Endothelial cell of umbilical vein (primary cell): ENCODE measurements at regions of chr15 and their contacts with region 1.

Region 1: DNA sequence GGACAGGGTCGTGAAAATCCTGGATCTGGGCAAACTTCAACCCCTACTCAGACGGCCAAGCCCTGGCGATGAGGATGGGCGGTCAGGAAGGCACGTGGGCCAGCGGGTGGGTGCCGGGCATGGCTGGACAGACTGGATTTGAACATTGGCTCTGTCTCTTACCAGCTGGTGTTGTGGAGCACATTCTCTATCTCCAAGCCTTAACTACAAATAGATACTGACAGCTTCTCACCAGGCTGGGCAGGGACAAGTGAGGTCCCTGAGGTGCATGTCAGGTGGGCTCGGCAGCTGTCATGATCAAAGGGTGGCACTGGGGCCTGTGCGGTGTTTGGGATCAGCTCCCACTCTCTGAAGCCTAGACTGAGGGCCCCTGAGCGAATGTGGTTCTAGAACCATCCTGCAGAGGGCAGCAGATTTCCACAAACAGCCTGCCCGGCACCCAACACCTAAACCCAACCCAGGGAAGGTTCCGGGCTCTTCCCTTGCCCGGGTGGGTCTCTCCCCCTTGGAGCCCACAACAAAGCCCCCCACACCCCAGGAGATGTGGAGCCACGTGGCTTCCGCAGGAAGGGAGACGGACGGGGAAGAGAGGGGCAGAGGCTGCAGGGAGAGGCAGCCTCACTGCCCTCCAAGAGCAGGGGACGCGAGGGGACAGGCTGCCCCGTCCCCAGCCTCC is 58.4 kb downstream of the RGMA start:
- DNase-seq: peak; percentile 64
- H3K4me3 ChIP-seq: no peak overlapping the region
- H3K27ac ChIP-seq: no peak overlapping the region
- H3K4me1 ChIP-seq: peaks cover 23% of the 10 kb centered on the region
- H3K27me3 ChIP-seq: no peaks in the 10 kb centered on the region
- CTCF ChIP-seq: peak; percentile 69 to 86
- POLR2A ChIP-seq: no peak

Region 2: DNA sequence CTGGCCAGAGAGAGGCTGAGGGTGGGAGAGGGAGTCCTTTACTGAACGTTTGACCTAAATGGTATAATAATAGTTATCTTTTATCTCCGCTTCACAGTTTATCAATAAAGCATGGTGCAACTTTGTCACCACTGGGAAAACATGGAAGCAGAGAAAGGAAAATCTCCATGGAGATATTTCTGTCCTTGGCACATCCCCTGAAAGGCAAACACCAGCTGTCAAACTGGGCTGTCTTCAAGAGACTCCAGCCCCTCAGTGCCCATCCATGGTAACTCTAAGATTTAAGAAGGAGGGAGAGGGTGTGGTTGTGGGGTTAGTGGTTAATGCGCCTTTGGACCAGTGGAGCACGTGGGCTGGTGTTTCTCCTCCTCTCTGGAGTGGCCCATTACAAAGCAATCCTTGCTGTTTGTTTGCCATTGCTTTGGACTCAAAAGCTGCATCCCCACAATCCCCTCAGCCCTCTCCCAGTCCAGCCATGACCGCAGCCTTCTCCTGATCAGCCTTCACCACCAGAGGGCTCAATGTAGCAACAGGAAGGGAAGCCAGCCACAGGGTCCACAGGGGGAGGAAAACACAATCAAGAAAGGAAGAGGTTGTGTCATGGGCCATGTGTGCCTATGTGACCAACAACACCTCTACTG is 336.8 kb before region 1 on chr15:
- CTCF ChIA-PET with region 1: no interaction called
- POLR2A ChIA-PET with region 1: no interaction called
- dilution Hi-C with region 1: no loop called
- intact Hi-C with region 1: no loop called
- DNase-seq: peak; percentile 69
- H3K4me3 ChIP-seq: no peak overlapping the region
- H3K27ac ChIP-seq: no peak overlapping the region
- H3K4me1 ChIP-seq: peaks cover 2% of the 10 kb centered on the region
- H3K27me3 ChIP-seq: no peaks in the 10 kb centered on the region
- CTCF ChIP-seq: peak; percentile 71 to 75
- POLR2A ChIP-seq: no peak

Region 3: GRCh38 chr15:93018580-93018979 is 12.0 kb before region 1 on chr15:
- CTCF ChIA-PET with region 1: interaction called, 11 read pairs
- POLR2A ChIA-PET with region 1: no interaction called
- dilution Hi-C with region 1: no loop called
- intact Hi-C with region 1: no loop called
- DNase-seq: no peak
- H3K4me3 ChIP-seq: no peak overlapping the region
- H3K27ac ChIP-seq: no peak overlapping the region
- H3K4me1 ChIP-seq: no peaks in the 10 kb centered on the region
- H3K27me3 ChIP-seq: no peaks in the 10 kb centered on the region
- CTCF ChIP-seq: peak in 1 of 2 donors; percentile 16
- POLR2A ChIP-seq: no peak

Region 4: DNA sequence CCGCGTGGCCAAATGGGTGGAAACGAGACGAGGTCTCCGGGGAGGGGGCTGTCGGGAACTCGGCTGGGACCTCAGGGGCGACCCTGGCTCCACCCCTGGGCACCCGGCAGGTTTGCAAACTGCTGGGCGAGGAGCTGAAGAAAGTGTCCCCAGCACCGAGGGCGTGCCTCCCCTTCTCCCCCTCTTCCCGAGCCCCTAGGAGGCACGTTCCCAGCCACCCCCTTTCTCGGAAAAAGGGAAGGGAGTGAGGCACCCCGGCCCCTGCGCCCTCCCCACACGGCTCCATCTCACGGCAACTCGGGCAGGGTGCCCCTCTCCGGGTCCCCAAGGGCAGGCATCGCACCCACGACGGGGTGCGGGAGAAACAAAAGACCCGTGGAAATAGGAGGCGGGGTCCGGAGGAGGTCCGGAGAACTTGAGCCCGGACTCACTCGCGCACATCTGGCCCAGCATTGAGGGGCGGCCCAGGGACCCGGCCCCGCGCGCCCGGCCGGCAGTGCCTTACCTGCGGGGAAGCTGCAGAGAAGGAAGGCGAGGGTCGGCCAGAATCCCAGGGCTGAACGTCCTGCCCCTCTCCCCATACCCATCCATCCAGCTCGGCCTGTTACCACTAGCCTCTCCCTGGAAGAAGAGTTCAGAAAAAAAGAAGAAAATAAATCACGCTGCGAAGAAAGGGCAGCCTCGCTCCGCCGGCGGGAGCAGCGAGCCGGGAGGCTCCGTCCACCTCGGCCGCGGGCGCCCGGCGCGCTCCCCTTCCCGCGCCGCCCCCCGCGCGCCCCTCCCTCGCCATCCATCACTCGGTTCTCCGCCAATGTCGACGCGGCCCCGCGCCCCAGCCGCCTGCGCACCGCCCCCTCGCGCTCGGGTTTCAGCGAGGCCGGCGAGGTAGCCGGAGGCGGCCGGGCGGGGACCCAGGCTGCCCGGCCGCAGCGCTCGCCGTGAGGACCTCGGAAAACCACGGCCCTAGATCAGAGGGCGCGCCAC is 42.1 kb after region 1 on chr15:
- CTCF ChIA-PET with region 1: interaction called, 3 read pairs
- POLR2A ChIA-PET with region 1: no interaction called
- dilution Hi-C with region 1: no loop called
- intact Hi-C with region 1: loop called (anchors 2 kb)
- DNase-seq: peak; percentile 42
- H3K4me3 ChIP-seq: peak overlapping the region in 1 of 3 experiments; percentile 14
- H3K27ac ChIP-seq: no peak overlapping the region
- H3K4me1 ChIP-seq: peaks cover 3% of the 10 kb centered on the region
- H3K27me3 ChIP-seq: peaks cover 20 to 26% of the 10 kb centered on the region in 2 experiments
- CTCF ChIP-seq: no peak
- POLR2A ChIP-seq: no peak

Region 5: DNA sequence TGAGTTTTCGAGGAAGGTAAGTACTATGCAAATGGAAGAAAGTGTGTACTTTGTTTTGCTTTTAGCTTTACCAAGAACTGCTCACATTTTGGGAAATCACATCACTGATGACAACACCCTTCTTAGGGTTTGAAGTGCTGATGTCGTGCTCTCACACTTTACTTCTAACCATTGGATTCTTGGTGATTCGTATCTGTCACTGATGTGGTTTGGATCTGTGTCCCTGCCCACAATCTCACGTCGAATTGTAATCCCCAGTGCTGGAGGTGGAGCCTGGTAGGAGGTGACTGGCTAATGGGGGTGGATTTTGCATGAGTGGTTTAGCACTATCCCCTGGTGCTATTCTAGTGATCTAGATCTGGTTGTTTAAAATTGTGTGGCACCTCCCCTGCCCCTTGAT is 133.8 kb after region 1 on chr15:
- CTCF ChIA-PET with region 1: no interaction called
- POLR2A ChIA-PET with region 1: no interaction called
- dilution Hi-C with region 1: no loop called
- intact Hi-C with region 1: no loop called
- DNase-seq: no peak
- H3K4me3 ChIP-seq: no peak overlapping the region
- H3K27ac ChIP-seq: no peak overlapping the region
- H3K4me1 ChIP-seq: no peaks in the 10 kb centered on the region
- H3K27me3 ChIP-seq: no peaks in the 10 kb centered on the region
- CTCF ChIP-seq: no peak
- POLR2A ChIP-seq: no peak

Region 6: DNA sequence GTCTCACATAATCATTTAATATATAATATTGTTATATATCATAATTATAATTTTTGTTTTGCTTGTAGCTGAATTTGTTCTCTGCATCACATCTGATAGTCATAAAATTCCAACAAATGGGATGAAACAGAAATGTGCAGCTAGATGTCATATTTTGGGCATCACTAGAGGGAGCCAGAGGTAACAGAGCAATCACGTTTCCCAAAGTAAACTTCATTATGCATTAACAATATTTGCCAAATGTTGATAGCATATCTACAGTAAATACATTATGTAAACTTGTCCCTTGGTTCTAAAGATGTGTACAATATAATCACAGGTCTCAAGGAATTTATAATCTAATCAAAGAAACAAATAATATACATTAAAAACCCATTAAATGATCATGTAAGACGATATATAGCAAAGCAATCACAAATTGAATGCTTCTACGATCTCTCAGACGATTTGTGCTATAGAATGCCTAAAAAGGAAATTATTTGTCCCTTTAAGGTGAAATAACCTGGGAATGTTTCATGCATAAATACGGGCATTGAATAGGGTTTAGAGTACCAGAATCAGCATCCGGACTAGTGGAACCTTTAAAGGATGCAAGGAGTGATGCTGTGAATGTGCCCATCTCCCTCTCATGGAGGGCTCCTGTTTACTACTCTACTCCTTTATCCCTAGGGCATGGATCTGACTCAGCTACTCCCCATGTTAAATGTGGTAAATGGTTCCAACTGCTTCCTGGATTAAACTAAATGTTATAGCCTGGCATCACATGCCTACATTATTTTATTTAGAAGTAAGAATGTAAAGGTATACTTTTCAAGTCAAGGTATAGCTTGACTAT is 966.7 kb after region 1 on chr15:
- CTCF ChIA-PET with region 1: no interaction called
- POLR2A ChIA-PET with region 1: no interaction called
- dilution Hi-C with region 1: no loop called
- intact Hi-C with region 1: loop called (anchors 5 kb)
- DNase-seq: peak; percentile 6
- H3K4me3 ChIP-seq: no peak overlapping the region
- H3K27ac ChIP-seq: no peak overlapping the region
- H3K4me1 ChIP-seq: no peaks in the 10 kb centered on the region
- H3K27me3 ChIP-seq: no peaks in the 10 kb centered on the region
- CTCF ChIP-seq: peak; percentile 37 to 42
- POLR2A ChIP-seq: no peak

Region 7: GRCh38 chr15:94324117-94324826 is 1293.7 kb after region 1 on chr15:
- CTCF ChIA-PET with region 1: interaction called, 137 read pairs
- POLR2A ChIA-PET with region 1: no interaction called
- dilution Hi-C with region 1: no loop called
- intact Hi-C with region 1: loop called (anchors 1 kb)
- DNase-seq: peak; percentile 62
- H3K4me3 ChIP-seq: no peak overlapping the region
- H3K27ac ChIP-seq: no peak overlapping the region
- H3K4me1 ChIP-seq: no peaks in the 10 kb centered on the region
- H3K27me3 ChIP-seq: no peaks in the 10 kb centered on the region
- CTCF ChIP-seq: peak; percentile 79 to 84
- POLR2A ChIP-seq: no peak